ENCODE measurements at regions of chr7 and their contacts with region 1.

Region 1: GRCh38 chr7:26667500-26668133 is 196.8 kb downstream of the SKAP2 start:
- DNase-seq: peak; percentile 68
- ATAC-seq: peak; percentile 61
- H3K4me3 Mint-ChIP-seq: no peak overlapping the region
- H3K27ac Mint-ChIP-seq: no peak overlapping the region
- H3K4me1 Mint-ChIP-seq: peaks cover 15% of the 10 kb centered on the region
- H3K27me3 Mint-ChIP-seq: peaks cover 11% of the 10 kb centered on the region

Region 2: GRCh38 chr7:26078437-26079336 is 588.9 kb before region 1 on chr7:
- CTCF ChIA-PET with region 1: interaction called, 6 read pairs
- POLR2A ChIA-PET with region 1: no interaction called
- intact Hi-C with region 1: loop called in 1 of 2 experiments (anchors 5 kb)
- DNase-seq: peak; percentile 90
- ATAC-seq: peak; percentile 99
- H3K4me3 Mint-ChIP-seq: no peak overlapping the region
- H3K27ac Mint-ChIP-seq: no peak overlapping the region
- H3K4me1 Mint-ChIP-seq: peaks cover 3% of the 10 kb centered on the region
- H3K27me3 Mint-ChIP-seq: peaks cover 13% of the 10 kb centered on the region

Region 3: DNA sequence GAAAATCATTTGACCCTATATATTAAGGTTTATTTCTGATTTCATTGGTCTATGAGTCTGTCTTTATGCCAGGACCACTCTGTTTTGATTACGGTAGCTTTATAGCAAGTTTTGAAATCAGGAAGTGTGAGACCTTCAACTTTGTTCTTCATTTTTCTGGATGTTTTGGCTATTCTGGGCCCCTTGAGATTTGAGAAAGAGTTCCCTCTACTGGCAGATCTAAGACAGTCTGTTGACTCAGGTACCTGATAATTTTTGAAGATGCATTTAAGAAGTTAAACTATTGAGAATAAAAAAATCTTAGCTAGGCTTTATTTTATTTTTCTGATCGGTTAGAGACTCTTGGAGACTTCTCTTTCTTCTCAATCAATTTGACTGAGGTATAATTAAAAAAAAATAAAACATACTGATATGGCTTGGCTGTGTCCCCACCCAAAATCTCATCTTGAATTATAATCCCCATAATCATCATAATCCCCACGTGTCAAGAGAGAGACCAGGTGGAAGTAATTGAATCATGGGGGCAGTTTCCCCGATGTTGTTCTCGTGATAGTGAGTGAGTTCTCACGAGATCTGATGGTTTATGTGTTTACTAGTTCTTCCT is 166.8 kb before region 1 on chr7:
- CTCF ChIA-PET with region 1: no interaction called
- POLR2A ChIA-PET with region 1: no interaction called
- intact Hi-C with region 1: loop called in 1 of 2 experiments (anchors 5 kb)
- DNase-seq: no peak
- ATAC-seq: no peak
- H3K4me3 Mint-ChIP-seq: no peak overlapping the region
- H3K27ac Mint-ChIP-seq: no peak overlapping the region
- H3K4me1 Mint-ChIP-seq: no peaks in the 10 kb centered on the region
- H3K27me3 Mint-ChIP-seq: peaks cover 3% of the 10 kb centered on the region

Region 4: DNA sequence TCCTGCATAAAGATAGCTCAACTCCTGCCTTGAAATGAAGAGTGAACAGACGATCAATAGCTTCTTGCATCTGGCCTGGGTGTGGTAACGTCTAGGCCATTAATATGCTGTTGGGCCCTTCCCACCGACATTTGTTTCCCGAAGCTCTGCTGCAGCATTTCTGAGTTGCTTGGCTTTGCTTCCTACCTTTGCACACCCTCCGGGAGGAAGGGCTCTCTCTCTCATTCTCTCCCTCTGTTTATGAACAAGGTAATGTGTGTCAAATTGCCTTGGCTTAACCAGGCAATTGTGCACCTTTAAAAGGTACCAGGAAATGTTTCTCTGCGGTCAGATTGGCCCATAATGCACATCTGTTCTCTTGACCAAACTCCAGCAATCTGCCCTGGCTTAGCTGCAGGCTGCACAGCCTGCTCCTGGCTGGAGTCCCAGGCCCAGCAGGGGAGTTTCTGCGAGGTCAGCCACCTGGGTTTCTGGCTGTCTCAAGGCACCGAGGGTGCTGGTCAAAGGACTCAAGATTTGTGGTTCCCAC is 152.2 kb before region 1 on chr7:
- CTCF ChIA-PET with region 1: no interaction called
- POLR2A ChIA-PET with region 1: no interaction called
- intact Hi-C with region 1: loop called in 1 of 2 experiments (anchors 5 kb)
- DNase-seq: no peak
- ATAC-seq: no peak
- H3K4me3 Mint-ChIP-seq: no peak overlapping the region
- H3K27ac Mint-ChIP-seq: no peak overlapping the region
- H3K4me1 Mint-ChIP-seq: no peaks in the 10 kb centered on the region
- H3K27me3 Mint-ChIP-seq: peaks cover 8% of the 10 kb centered on the region

Region 5: GRCh38 chr7:26686448-26686981 is 18.9 kb after region 1 on chr7:
- CTCF ChIA-PET with region 1: interaction called, 18 read pairs
- POLR2A ChIA-PET with region 1: no interaction called
- intact Hi-C with region 1: no loop called
- DNase-seq: no peak
- ATAC-seq: no peak
- H3K4me3 Mint-ChIP-seq: no peak overlapping the region
- H3K27ac Mint-ChIP-seq: no peak overlapping the region
- H3K4me1 Mint-ChIP-seq: no peaks in the 10 kb centered on the region
- H3K27me3 Mint-ChIP-seq: peaks cover 16% of the 10 kb centered on the region

Measured in activated CD4-positive, alpha-beta T cell treated with anti-CD3 and anti-CD28 coated beads for 36 hours (primary cell).